Tibial artery (tissue), 4 donors: ENCODE measurements at regions of chr15 and their contacts with region 1.

Region 1: GRCh38 chr15:89243691-89244471 is at the start of gene FANCI:
- DNase-seq: peak; percentile 95 to 96
- H3K4me3 ChIP-seq: peak within 1 kb of the TSS; percentile 59 to 62
- H3K27ac ChIP-seq: peak within 1 kb of the TSS; percentile 63 to 72
- H3K4me1 ChIP-seq: peaks cover 0 to 21% (median 14%) of the 10 kb centered on the region in 4 donors
- H3K27me3 ChIP-seq: no peaks in the 10 kb centered on the region
- CTCF ChIP-seq: peak; percentile 28 to 41

Region 2: DNA sequence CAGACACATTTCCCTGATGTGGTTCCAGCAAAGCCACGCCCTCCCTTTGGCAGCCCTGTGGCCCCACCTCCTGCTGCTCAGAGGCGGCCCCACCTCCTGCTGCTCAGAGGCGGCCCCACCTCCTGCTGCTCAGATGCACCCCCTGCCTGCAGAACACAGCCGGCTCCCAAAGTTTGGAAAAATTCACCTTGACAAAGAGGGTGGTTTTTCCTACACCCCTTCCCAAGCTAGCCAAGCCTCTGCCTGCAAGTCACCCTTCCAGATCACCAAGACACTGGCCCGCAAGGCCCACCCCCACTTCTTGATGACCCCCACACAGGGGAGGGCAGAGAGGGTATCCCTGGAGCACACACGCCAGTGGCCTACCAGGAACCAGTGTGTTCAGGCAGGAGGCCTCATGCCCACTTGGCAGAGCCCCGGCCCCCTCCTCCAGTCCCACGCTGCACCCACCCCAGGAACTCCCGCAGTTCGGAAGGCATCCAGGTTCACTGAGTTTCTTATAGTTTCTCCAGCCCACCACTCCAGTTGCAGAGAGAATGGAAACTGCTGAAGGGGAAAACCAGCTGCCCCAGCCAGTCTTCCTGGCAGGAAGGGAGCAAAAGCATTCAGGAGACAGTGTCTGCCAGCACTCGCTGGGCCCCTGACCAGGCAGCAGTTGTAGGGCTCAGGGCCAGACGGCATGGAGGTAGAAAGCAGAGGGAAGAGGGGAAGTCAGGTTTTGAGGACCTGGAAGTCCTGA is 346.3 kb before region 1 on chr15:
- intact Hi-C with region 1: loop called (anchors 10 kb)
- DNase-seq: peak; percentile 82 to 95
- H3K4me3 ChIP-seq: peak overlapping the region in 1 of 2 donors; percentile 15
- H3K27ac ChIP-seq: peak overlapping the region; percentile 78 to 87
- H3K4me1 ChIP-seq: peaks cover 0 to 85% (median 70%) of the 10 kb centered on the region in 4 donors
- H3K27me3 ChIP-seq: no peaks in the 10 kb centered on the region
- CTCF ChIP-seq: peak; percentile 61 to 72